ENCODE measurements at regions of chr19 and their contacts with region 1.

Region 1: GRCh38 chr19:40690693-40691420 is 406 bp upstream of the NUMBL start:
- DNase-seq: peak; percentile 99

Region 2: DNA sequence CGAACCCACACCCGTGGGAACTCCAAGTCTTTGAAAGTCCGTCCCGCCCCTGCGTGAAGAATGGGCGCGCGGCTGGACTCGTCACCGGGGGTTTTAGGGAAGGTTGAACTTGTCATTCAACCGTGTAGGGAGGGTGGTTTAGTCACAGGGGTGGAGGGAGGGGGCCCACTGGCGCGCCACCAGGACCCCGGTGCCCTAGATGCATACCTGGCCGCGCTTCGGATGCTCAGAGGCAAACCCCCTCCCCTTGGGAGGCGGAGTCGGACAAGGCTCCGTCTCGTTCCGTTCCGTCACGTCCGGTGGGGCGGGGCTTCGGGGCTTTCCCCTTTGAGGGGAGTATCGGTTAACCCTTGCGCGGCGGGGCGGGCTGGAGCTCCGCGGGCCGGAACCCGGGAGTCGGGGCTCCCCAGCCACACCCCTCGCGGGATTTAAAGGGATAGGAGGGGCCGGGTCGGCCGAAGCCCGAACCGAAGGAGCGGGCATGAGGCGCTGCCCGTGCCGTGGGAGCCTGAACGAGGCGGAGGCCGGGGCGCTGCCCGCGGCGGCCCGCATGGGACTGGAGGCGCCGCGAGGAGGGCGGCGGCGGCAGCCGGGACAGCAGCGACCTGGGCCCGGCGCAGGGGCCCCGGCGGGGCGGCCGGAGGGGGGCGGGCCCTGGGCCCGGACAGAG is 25.9 kb after region 1 on chr19 and contains the starts of genes COQ8B and ITPKC:
- CTCF ChIA-PET with region 1: no interaction called
- POLR2A ChIA-PET with region 1: interaction called, 13 read pairs
- DNase-seq: peak; percentile 96

Measured in HEK293T (cell line).